Activated CD4-positive, alpha-beta T cell treated with anti-CD3 and anti-CD28 coated beads for 36 hours (primary cell): ENCODE measurements at regions of chr14 and their contacts with region 1.

Region 1: DNA sequence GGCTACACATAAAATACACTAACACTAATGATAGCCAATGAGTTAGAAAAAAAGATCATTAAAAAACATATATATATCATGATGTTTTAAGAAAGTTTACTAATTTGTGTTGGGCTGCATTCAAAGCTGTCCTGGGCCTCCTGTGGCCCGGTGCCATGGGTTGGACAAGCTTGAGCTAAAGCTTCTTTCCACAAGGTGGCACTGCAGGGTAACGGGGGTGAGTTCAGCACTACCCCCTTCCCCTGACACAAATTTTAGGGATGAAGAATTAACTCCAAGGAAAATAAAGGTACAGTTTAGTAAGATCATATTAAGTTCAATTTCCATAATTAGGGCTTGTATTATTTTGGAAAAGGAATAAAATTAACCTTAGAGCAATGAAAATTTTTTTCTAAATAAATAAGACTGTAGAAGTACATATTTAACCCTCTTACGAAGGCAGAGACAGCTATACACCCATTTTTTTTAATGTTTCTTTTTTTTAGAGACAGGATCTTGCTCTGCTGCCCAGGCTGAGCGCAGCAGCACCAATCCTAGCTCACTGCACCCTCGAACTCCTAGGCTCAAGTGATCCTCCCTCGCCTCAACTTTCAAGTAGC is 38.9 kb downstream of the PPP1R13B start:
- DNase-seq: peak; percentile 82
- ATAC-seq: peak; percentile 91
- H3K4me3 Mint-ChIP-seq: no peak overlapping the region
- H3K27ac Mint-ChIP-seq: no peak overlapping the region
- H3K4me1 Mint-ChIP-seq: peaks cover 15% of the 10 kb centered on the region
- H3K27me3 Mint-ChIP-seq: no peaks in the 10 kb centered on the region

Region 2: DNA sequence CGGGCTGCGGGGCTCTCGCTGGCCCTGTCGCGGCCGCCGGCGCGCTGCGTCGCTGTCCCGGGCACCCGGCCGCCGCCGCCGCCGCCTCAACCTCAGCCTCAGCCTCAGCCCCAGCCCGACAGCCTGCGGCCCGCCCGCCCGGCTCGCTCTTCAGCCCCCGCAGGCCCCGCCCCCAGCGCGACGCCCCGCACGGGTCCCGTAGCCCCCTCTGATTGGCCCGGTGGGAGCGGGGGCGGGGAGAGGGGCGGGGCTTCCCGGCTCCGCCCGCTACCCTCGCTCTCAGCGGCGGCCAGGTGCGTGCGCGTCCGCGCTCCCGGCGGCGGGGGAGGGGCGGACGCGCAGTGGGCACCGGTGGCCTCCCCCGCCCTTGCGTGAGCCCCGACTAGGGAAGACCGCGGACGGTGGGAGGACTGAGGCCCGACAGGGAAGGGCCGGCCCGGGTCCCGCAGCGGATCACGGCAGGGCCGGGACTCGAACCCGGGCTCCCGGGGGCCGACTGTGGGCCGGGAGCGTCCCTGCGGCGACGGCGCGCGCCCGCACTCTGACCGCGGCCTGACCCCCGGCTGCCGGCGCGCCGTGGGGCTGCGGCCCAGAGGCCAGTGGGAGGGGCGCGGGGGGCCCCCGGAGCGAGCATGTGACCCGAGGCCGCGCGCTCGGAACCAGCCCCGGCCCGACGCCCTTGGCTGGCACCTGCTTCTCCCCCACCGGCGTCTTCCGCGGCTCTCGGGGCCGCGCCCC is 39.1 kb after region 1 on chr14 and contains the start of gene PPP1R13B:
- CTCF ChIA-PET with region 1: interaction called, 5 read pairs
- POLR2A ChIA-PET with region 1: no interaction called
- intact Hi-C with region 1: loop called in 1 of 2 experiments (anchors 2 kb)
- DNase-seq: peak; percentile 97
- ATAC-seq: peak; percentile 98
- H3K4me3 Mint-ChIP-seq: peak within 1 kb of the TSS; percentile 76
- H3K27ac Mint-ChIP-seq: peak within 1 kb of the TSS; percentile 38
- H3K4me1 Mint-ChIP-seq: peaks cover 16% of the 10 kb centered on the region
- H3K27me3 Mint-ChIP-seq: peaks cover 5% of the 10 kb centered on the region
- total RNA-seq, gene PPP1R13B: 9.3 to 10.3 TPM

Region 3: DNA sequence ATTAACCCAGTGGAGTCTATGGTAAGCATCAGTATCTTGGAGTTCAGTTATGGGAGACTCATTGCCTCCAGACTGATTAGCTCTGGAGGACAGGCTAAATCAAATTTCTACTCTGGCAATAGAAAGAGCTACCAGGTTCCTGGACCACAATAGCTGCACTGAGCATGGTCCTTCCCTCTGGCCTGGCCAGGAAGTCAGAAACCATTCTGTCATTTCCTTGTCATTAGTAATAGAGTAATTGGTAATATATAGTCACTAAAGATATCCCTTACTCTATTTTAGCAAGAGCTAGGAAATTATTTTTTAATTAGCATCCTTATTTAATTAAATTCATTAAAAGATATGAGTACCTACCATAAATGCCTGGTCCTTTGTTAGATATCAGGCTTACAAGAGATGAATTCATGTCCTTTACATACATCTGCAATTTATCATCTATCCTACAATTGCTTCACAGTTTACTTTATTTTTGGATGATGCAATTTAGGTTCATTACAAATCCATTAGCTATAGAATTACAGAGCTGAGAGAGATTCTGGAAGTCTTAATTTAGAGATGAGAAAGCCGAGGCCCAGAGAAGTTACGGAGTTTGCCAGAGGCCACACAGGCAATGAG is 96.1 kb after region 1 on chr14:
- CTCF ChIA-PET with region 1: interaction called, 31 read pairs
- POLR2A ChIA-PET with region 1: interaction called, 3 read pairs
- intact Hi-C with region 1: no loop called
- DNase-seq: no peak
- ATAC-seq: no peak
- H3K4me3 Mint-ChIP-seq: no peak overlapping the region
- H3K27ac Mint-ChIP-seq: no peak overlapping the region
- H3K4me1 Mint-ChIP-seq: peaks cover 12% of the 10 kb centered on the region
- H3K27me3 Mint-ChIP-seq: no peaks in the 10 kb centered on the region

Region 4: DNA sequence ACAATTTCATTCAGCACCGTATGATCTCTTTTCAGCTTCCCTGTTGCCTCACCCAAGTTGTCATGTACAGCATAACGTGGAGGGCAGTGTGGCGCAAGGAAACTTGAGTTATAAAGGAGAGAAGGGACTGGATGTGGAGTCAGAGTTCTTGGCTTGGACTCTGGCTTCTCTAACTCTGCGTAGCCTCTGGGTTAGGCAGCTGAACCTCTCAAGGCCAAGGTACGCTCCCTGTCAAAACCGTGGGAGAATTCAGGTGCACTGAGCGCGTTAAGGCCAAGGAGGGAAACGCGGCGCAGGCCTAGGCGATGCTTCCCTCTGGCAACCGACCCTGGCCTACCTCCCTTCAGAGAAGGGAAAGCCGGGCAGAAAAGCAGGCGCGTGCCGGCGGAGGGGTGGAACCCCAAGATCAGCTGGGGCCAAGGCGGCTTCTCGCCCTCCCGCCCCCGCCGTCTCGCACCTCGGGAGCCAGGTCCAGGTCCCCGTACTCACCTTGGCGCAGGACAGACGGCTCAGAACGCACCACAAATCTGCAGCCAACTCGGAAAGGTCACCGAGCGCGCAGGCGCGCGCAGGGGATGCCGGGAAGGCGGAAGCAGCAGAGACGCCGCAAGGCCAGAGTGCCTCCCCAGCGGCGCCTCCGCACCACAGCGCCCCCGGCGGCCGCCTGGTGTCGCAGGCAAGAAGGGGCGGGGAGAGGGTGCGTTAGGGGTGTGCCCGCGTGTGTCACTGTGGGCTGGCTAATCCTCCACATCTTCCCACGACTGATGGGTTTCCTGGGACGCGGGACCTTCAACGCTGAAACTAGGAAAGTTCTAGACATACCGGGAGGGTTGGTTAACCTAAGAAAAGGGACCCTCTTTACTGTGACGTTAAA is 112.7 kb after region 1 on chr14:
- CTCF ChIA-PET with region 1: interaction called, 5 read pairs
- POLR2A ChIA-PET with region 1: no interaction called
- intact Hi-C with region 1: loop called in 1 of 2 experiments (anchors 2 kb)
- DNase-seq: peak; percentile 97
- ATAC-seq: peak; percentile 99
- H3K4me3 Mint-ChIP-seq: peak overlapping the region; percentile 85
- H3K27ac Mint-ChIP-seq: peak overlapping the region; percentile 80
- H3K4me1 Mint-ChIP-seq: peaks cover 12% of the 10 kb centered on the region
- H3K27me3 Mint-ChIP-seq: peaks cover 6% of the 10 kb centered on the region

Region 5: GRCh38 chr14:103994535-103995182 is 186.2 kb after region 1 on chr14:
- CTCF ChIA-PET with region 1: interaction called, 5 read pairs
- POLR2A ChIA-PET with region 1: no interaction called
- intact Hi-C with region 1: loop called in 1 of 2 experiments (anchors 10 kb)
- DNase-seq: no peak
- ATAC-seq: no peak
- H3K4me3 Mint-ChIP-seq: no peak overlapping the region
- H3K27ac Mint-ChIP-seq: no peak overlapping the region
- H3K4me1 Mint-ChIP-seq: no peaks in the 10 kb centered on the region
- H3K27me3 Mint-ChIP-seq: peaks cover 11% of the 10 kb centered on the region